HEK293 (cell line): ENCODE measurements at regions of chr1 and their contacts with region 1.

Region 1: GRCh38 chr1:28194326-28195035 is 18.0 kb upstream of the PTAFR start:
- H3K4me3 ChIP-seq: no peak overlapping the region
- H3K27ac ChIP-seq: no peak overlapping the region
- H3K4me1 ChIP-seq: peaks cover 7% of the 10 kb centered on the region; the same call in 1 of the 2 replicates
- CTCF ChIP-seq: no peak

Region 2: GRCh38 chr1:28010969-28011368 is 183.5 kb before region 1 on chr1:
- CTCF ChIA-PET with region 1: no interaction called
- POLR2A ChIA-PET with region 1: no interaction called
- H3K4me3 ChIP-seq: no peak overlapping the region
- H3K27ac ChIP-seq: no peak overlapping the region
- H3K4me1 ChIP-seq: no peaks in the 10 kb centered on the region
- CTCF ChIP-seq: no peak

Region 3: DNA sequence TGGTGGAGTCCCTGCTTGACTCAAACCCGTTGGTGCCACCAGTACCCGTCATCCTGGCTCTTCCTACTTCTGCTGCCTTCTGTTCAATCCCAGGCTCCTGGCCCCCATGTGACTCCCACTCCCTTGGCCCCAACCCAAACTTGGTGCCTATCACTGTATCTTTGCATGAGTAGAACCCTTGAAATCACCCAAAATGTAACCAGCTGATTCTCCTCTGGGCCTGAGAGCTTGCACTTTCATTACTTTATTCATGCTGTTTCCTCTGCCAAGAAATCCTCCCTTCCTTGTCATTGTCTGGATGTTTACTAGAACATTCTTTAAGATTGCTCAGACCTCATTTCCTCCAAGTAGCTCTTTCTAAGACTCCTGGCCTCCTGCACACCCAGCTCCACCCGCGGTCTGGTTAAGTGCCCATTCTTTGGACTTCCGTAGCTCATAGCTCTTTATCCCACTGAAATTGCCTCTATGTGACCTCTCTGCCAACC is 33.7 kb before region 1 on chr1:
- CTCF ChIA-PET with region 1: no interaction called
- POLR2A ChIA-PET with region 1: no interaction called
- H3K4me3 ChIP-seq: no peak overlapping the region
- H3K27ac ChIP-seq: no peak overlapping the region
- H3K4me1 ChIP-seq: no peaks in the 10 kb centered on the region
- CTCF ChIP-seq: no peak

Region 4: DNA sequence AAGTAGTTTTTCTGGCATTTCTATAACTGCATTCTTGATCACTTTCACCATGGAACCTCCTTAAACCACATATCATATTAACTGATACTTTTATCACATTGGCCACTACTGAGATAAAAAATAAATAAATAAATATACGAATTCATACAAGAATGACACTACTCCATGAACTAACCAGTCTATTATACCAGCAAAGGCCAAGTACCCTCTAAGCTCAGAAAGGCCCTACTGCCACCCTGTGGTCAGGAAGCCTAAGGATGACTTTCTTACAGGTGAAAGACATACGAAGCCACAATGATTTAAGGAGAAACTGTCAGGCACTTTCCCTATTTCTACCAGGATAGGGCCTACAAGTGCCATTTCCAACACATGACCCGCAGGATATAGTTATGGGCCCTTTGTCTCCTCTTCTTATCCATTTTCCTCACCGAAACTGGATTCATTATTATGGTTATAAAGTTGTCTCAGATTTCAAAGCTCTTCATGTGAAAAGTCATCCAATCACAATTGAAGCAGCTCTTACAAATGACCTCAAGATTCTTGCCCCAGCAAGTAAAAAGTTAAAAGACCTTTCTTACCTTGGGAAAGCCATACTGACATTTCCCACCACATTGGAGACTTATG is 14.4 kb after region 1 on chr1:
- CTCF ChIA-PET with region 1: interaction called, 15 read pairs
- POLR2A ChIA-PET with region 1: interaction called, 3 read pairs
- H3K4me3 ChIP-seq: no peak overlapping the region
- H3K27ac ChIP-seq: no peak overlapping the region
- H3K4me1 ChIP-seq: no peaks in the 10 kb centered on the region
- CTCF ChIP-seq: 0 out of 2 replicates have a peak, but pooled peaks have one; percentile 28